AG04450 (cell line): ENCODE measurements at regions of chr11 and their contacts with region 1.

Region 1: DNA sequence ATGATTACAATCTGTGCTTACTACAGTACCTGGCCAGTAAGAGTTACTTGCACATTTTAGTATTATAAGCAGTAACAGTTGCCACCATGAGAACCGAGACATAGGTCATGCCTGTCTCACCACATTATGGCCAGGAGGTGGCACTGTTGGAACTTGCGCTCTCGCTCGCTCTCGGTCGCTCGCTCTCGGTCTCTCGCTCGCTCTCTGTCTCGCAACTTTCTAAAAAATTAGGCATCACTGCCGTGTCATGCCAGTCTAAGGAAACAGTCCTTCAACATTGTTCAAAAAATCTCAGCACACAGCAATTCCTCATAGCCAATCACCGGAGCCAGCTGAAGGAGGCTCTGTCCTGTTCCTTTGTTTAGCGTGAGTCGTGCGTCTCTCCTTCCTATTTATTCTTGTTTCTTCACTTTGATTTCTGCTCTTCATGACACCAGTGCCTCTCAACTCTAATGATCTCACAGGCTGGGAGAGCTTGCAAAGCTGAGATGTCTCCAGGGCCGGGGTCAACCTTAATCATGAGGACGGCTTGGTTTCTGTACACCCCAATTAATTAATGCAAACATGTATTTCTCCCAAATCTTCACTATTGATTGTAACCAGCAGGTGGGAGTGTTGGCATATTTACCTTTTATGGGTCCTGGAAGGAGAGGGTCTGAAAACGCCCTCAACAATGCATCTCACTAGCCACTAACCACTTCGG is 6.3 kb upstream of the ADAMTS8 start:
- DNase-seq: no peak
- H3K4me3 ChIP-seq: peak overlapping the region; percentile 65
- H3K27ac ChIP-seq: peak overlapping the region; percentile 49
- H3K27me3 ChIP-seq: peaks cover 14% of the 10 kb centered on the region
- CTCF ChIP-seq: peak; percentile 90

Region 2: GRCh38 chr11:130390071-130390758 is 44.5 kb before region 1 on chr11:
- CTCF ChIA-PET with region 1: interaction called, 23 read pairs
- POLR2A ChIA-PET with region 1: interaction called, 16 read pairs
- DNase-seq: peak; percentile 97
- H3K4me3 ChIP-seq: no peak overlapping the region
- H3K27ac ChIP-seq: peak overlapping the region; percentile 62
- H3K27me3 ChIP-seq: peaks cover 20% of the 10 kb centered on the region
- CTCF ChIP-seq: peak; percentile 79

Region 3: GRCh38 chr11:130553306-130553705 is 118.6 kb after region 1 on chr11:
- CTCF ChIA-PET with region 1: no interaction called
- POLR2A ChIA-PET with region 1: no interaction called
- DNase-seq: no peak
- H3K4me3 ChIP-seq: no peak overlapping the region
- H3K27ac ChIP-seq: no peak overlapping the region
- H3K27me3 ChIP-seq: no peaks in the 10 kb centered on the region
- CTCF ChIP-seq: no peak

Region 4: GRCh38 chr11:130623670-130624668 is 189.3 kb after region 1 on chr11:
- CTCF ChIA-PET with region 1: interaction called, 14 read pairs
- POLR2A ChIA-PET with region 1: no interaction called
- DNase-seq: no peak
- H3K4me3 ChIP-seq: no peak overlapping the region
- H3K27ac ChIP-seq: no peak overlapping the region
- H3K27me3 ChIP-seq: no peaks in the 10 kb centered on the region
- CTCF ChIP-seq: 0 out of 2 replicates have a peak, but pooled peaks have one; percentile 27

Region 5: DNA sequence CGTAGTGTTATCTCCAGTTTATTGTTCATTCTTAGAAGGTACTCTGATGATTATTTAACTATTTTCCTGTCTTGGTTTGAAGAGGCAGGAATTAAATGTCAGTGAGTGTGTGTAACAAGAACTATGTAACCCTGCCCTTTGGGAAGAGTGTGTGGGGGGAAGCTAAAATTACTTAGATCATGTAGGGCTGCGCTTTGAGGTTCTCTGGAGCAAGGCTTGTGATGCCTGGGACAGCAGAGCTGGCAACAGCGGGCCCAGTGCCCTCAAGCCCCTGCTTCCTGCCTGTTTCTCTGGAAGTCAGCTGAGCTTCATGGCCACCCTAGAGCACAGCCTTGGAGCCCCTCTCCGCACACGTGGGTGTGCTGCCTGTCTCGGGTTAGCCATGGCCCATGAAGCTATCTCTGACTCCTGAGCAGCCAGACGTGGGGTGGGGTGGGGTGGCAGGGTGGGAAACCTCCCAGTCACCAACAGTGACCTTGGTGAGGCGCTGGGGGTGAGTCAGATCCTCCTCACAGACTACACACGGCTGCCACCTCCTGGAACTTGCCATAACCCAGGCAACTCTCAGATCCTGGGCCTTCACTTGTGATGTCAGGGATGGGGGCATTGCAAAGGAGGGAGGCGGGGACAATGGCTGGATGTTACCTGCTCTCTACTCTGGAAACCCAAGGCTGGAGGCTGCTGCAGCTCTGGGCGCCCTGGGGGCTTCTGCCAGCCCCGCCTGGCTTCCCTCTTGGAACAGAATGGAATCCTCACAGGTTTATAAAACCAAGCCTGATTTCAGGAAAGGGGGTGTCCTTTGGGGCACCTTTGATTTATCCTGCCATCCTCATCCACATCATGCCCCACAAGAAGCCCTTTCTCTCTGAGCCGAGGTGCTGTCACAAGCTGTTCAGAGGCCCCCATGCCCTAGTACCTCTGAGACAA is 393.0 kb after region 1 on chr11:
- CTCF ChIA-PET with region 1: interaction called, 41 read pairs
- POLR2A ChIA-PET with region 1: no interaction called
- DNase-seq: peak; percentile 43
- H3K4me3 ChIP-seq: no peak overlapping the region
- H3K27ac ChIP-seq: peak overlapping the region; percentile 34
- H3K27me3 ChIP-seq: peaks cover 5% of the 10 kb centered on the region
- CTCF ChIP-seq: peak; percentile 70

Region 6: DNA sequence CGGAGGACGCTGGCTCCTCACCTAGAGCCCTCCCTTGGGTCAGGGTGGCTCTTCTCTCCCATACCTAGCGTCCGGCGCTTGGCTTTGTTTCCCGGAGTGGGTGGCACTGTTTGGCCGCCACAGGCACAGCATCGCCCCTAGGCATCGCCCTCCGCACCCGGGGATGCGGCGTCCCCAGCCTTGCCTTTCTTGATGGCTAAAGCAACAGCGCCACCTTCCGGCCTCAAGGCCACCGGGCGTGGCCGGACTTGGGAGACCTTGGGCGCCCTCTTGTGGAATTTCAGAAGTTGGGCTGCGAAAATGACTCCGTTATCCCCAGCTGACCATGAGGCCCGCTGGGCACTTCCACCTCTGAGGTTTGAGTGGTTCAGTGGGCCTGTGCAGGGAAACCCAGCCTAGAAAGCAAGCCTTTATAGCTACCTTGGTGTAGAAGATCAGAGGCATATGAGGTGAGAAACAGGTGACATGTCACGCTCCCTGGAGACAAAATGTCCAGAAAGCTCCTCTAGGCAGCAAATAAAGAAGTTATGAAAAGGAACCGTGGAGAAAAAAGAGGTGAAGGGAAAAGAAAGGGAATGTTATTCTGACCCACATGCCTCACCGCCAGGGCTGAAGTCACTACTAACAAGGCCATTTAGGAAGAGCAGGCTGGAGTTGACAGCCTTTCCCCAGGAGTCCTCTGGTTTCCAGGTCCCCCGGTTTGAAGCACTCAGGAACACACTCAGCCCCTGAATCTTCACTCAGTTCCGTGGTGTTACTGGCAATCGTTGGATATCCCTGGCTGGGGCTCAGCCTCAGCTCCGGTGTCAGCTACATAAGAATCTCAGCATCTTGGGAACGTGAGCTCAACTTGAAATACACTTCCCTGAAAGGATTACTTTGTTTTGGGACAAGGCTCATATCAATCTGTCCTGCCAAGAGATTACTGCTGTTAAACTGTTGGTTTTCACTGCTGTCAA is 427.5 kb after region 1 on chr11:
- CTCF ChIA-PET with region 1: interaction called, 331 read pairs
- POLR2A ChIA-PET with region 1: interaction called, 7 read pairs
- DNase-seq: peak; percentile 93
- H3K4me3 ChIP-seq: no peak overlapping the region
- H3K27ac ChIP-seq: no peak overlapping the region
- H3K27me3 ChIP-seq: no peaks in the 10 kb centered on the region
- CTCF ChIP-seq: peak; percentile 100

Region 7: DNA sequence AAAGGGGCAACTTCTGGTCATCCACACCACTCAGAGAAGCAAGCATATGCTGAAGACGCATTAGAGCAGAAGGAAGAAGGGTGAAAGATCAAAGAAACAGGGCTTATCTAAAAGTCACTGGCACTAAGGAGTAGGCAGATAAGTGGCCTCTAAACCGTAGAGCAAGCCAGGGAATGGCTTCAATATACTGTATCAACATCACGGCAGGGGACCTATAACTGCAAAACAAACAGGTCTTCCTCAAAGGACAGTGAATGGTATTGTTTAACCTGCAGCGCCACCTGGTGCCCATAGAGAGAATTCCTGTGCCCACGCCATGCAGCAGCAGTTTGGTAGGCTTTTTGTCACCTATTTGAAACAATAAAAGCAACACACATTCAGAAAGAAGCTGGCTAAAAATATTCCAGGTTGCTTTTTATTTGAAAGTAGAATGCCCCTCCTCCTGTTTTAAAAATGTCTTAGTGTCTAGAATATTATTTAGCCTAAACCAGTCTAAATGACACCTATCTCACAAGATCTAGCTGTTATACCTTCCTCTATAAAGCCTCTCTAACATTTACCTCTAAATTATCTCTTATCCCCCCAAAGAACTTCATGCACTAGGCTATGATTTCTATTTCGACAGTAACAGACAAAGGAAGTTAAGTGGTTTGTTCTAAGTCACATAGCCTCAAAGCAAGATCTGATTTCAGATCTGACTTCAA is 459.8 kb after region 1 on chr11:
- CTCF ChIA-PET with region 1: interaction called, 166 read pairs
- POLR2A ChIA-PET with region 1: interaction called, 3 read pairs
- DNase-seq: peak; percentile 55
- H3K4me3 ChIP-seq: no peak overlapping the region
- H3K27ac ChIP-seq: no peak overlapping the region
- H3K27me3 ChIP-seq: no peaks in the 10 kb centered on the region
- CTCF ChIP-seq: peak; percentile 91

Region 8: GRCh38 chr11:130979386-130979972 is 544.8 kb after region 1 on chr11:
- CTCF ChIA-PET with region 1: interaction called, 12 read pairs
- POLR2A ChIA-PET with region 1: no interaction called
- DNase-seq: peak; percentile 30
- H3K4me3 ChIP-seq: no peak overlapping the region
- H3K27ac ChIP-seq: no peak overlapping the region
- H3K27me3 ChIP-seq: peaks cover 8% of the 10 kb centered on the region
- CTCF ChIP-seq: peak; percentile 77